Activated T-helper 1 cell treated with anti-CD3 and anti-CD28 coated beads, Interleukin-12 subunit alpha, Interleukin-12 subunit beta, Interleukin-2, Interleukin-4 antibody, amounts not matched to agents 30 ng/mL and 10 ng/mL and 1 ng/mL, durations not matched to agents 14 hours and 24 hours and 36 hours (primary cell): ENCODE measurements at regions of chr7 and their contacts with region 1.

Region 1: GRCh38 chr7:142357953-142358520 is 100.2 kb upstream of the PRSS58 start:
- DNase-seq: no peak
- H3K4me3 Mint-ChIP-seq: no peak overlapping the region
- H3K27ac Mint-ChIP-seq: no peak overlapping the region
- H3K4me1 Mint-ChIP-seq: peaks cover 20% of the 10 kb centered on the region
- H3K27me3 Mint-ChIP-seq: peaks cover 17% of the 10 kb centered on the region

Region 2: GRCh38 chr7:142385491-142386340 is 27.7 kb after region 1 on chr7:
- intact Hi-C with region 1: loop called (anchors 1 kb)
- DNase-seq: peak; percentile 27
- H3K4me3 Mint-ChIP-seq: peak overlapping the region; percentile 65
- H3K27ac Mint-ChIP-seq: peak overlapping the region; percentile 2
- H3K4me1 Mint-ChIP-seq: peaks cover 21% of the 10 kb centered on the region
- H3K27me3 Mint-ChIP-seq: peaks cover 2% of the 10 kb centered on the region

Region 3: GRCh38 chr7:142885284-142886230 is 527.5 kb after region 1 on chr7 and contains the start of gene TRPV6:
- intact Hi-C with region 1: no loop called
- DNase-seq: no peak
- H3K4me3 Mint-ChIP-seq: no peak within 1 kb of the TSS
- H3K27ac Mint-ChIP-seq: no peak within 1 kb of the TSS
- H3K4me1 Mint-ChIP-seq: no peaks in the 10 kb centered on the region
- H3K27me3 Mint-ChIP-seq: peaks cover 7% of the 10 kb centered on the region
- total RNA-seq, gene TRPV6: not detected in 2 replicates